T-cell (primary cell): ENCODE measurements at regions of chr16 and their contacts with region 1.

Region 1: DNA sequence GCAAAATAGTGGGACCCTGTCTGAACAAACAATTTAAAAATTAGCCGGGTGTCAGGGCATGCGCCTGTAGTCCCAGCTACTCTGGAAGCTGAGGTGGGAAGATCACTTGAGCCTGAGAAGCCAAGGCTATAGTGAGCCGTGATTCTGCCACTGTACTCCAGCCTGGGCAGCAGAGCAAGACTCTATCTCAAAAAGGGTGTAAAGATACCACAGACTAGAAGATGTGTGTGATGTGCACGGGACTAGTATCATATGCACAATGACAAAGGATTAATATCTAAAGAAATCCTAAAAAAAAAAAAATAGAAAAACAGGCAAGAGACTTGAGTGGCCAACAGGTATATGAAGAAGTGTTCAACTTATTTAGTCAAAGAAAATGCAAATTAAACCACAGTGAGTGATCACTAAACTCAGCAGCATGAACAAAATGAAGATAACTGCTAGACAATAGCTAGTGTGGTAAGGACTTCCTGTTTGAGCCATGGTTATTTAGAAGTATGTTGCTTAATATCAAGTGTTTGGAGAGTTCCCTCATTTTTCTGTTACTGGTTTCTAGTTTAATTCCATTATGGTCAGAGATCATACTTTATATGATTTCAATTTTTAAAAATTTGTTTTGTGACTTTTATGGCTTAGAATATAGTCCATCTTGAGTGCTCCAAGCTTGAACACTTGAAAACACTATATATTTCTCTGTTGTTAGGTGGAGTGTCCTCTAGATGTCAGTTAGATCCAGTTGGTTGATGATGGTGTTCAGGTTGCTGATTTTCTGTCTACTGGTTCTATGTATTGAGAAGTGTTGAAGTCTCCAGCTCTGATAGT is 14.7 kb upstream of the SLX4 start:
- DNase-seq: peak in 1 of 35 experiments; percentile 43
- ATAC-seq: peak; percentile 85 to 92 (median 90)
- H3K4me3 ChIP-seq: no peak overlapping the region
- H3K4me3 Mint-ChIP-seq: peak overlapping the region in 2 of 3 donors; percentile 48 to 49
- H3K27ac ChIP-seq: peak overlapping the region; percentile 22
- H3K27ac Mint-ChIP-seq: peak overlapping the region; percentile 75 to 93
- H3K4me1 ChIP-seq: peaks cover 17 to 19% of the 10 kb centered on the region in 2 experiments
- H3K4me1 Mint-ChIP-seq: peaks cover 42 to 45% (median 43%) of the 10 kb centered on the region in 3 donors
- H3K27me3 ChIP-seq: no peaks in the 10 kb centered on the region
- H3K27me3 Mint-ChIP-seq: no peaks in the 10 kb centered on the region

Region 2: GRCh38 chr16:3065742-3066439 is 560.2 kb before region 1 on chr16:
- CTCF ChIA-PET with region 1: interaction called in 1 of 2 experiments, 11 read pairs
- POLR2A ChIA-PET with region 1: no interaction called
- DNase-seq: peak in 6 of 35 experiments; percentile 16 to 43 (median 32)
- ATAC-seq: peak; percentile 27 to 34 (median 31)
- H3K4me3 ChIP-seq: peak overlapping the region; percentile 94 to 97
- H3K4me3 Mint-ChIP-seq: peak overlapping the region; percentile 96 to 100 (median 97)
- H3K27ac ChIP-seq: peak overlapping the region; percentile 99
- H3K27ac Mint-ChIP-seq: peak overlapping the region; percentile 96 to 100
- H3K4me1 ChIP-seq: peaks cover 11 to 60% of the 10 kb centered on the region in 2 experiments
- H3K4me1 Mint-ChIP-seq: peaks cover 62 to 72% (median 67%) of the 10 kb centered on the region in 3 donors
- H3K27me3 ChIP-seq: no peaks in the 10 kb centered on the region
- H3K27me3 Mint-ChIP-seq: no peaks in the 10 kb centered on the region

Region 3: GRCh38 chr16:3701531-3701930 is 75.4 kb after region 1 on chr16:
- CTCF ChIA-PET with region 1: no interaction called
- POLR2A ChIA-PET with region 1: interaction called in 1 of 2 experiments, 10 read pairs
- DNase-seq: no peak
- ATAC-seq: no peak
- H3K4me3 ChIP-seq: no peak overlapping the region
- H3K4me3 Mint-ChIP-seq: no peak overlapping the region
- H3K27ac ChIP-seq: no peak overlapping the region
- H3K27ac Mint-ChIP-seq: no peak overlapping the region
- H3K4me1 ChIP-seq: peaks cover 11 to 12% of the 10 kb centered on the region in 2 experiments
- H3K4me1 Mint-ChIP-seq: peaks cover 5 to 9% (median 8%) of the 10 kb centered on the region in 3 donors
- H3K27me3 ChIP-seq: no peaks in the 10 kb centered on the region
- H3K27me3 Mint-ChIP-seq: no peaks in the 10 kb centered on the region